ENCODE measurements at regions of chr7 and their contacts with region 1.

Region 1: DNA sequence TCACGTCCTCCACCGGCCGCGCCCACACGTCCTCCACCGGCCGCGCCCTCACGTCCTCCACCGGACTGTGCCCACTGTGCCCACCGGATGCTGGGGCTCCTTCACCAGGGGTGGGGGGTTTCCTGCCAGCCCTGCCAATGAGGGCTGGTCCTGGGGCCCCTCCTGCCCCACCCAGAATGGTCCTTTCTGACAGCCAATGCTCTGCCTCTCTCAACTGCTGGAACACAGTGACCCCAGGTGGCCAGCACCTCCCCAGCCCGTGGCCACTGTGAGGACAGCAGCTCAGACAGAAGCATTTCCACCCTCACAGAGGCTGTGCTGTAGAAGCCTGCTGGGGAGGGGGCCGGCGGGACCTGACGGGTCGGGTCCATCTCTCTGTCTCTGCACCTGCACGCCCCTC is 90.1 kb upstream of the DNAAF5 start:
- DNase-seq: no peak
- ATAC-seq: no peak

Region 2: DNA sequence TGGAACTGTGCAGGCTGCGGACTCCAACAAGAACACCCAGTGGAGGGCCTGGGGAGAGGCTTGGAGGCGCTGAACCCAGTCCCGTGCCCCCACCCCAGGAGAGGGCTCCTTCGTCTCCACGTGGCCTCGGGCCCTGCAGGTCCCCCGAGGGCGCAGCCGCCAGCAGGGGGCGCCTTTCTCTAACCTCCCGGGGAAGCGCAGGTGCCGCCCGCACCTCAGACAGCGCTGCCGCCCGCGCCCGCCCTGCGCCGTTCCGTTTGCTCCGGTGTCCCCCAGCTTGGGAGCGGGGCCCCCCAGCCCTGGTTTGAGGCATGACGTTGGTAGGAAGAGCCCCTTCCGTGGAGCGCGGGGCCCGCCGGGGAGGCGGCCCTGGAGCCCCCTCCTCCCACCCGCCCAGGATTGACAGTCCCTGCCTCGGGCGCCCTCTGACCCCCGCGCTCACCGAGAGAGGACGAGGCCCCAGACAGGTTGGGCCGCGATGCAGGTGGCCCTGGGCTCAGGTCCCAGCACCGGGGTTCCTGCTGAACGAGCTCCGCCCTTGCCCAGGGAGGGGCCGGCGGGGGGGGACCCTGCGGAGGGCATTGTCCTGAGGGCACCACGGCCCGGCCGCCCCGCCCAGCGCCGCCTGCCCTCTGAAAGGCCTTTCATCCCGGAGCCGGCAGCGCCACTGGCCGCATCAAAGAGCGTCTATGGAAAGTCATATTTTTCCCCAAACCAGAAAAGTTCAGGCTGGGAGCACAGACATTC is 303.6 kb before region 1 on chr7:
- intact Hi-C with region 1: loop called (anchors 5 kb)
- DNase-seq: peak; percentile 90
- ATAC-seq: peak; percentile 92

Region 3: DNA sequence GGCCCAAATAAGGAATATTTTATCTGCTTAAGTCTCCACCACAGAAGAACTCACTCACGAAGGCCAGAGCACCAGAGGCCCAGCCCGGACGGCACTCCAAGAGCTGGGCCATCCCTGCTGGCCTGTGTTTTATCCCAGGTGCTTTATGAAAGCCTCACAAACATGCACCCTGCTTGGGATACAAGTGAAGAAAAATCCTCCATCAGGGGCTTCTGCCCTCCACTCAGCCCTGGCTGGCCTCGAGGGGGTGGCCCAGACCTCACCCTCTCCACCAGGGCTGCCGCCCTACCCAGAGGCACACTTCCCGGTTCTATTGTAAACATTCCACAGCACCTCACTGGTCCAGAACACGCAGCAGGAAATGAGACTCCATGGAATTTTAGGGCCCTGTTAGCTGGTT is 70.3 kb after region 1 on chr7:
- intact Hi-C with region 1: no loop called
- DNase-seq: no peak
- ATAC-seq: no peak

Region 4: DNA sequence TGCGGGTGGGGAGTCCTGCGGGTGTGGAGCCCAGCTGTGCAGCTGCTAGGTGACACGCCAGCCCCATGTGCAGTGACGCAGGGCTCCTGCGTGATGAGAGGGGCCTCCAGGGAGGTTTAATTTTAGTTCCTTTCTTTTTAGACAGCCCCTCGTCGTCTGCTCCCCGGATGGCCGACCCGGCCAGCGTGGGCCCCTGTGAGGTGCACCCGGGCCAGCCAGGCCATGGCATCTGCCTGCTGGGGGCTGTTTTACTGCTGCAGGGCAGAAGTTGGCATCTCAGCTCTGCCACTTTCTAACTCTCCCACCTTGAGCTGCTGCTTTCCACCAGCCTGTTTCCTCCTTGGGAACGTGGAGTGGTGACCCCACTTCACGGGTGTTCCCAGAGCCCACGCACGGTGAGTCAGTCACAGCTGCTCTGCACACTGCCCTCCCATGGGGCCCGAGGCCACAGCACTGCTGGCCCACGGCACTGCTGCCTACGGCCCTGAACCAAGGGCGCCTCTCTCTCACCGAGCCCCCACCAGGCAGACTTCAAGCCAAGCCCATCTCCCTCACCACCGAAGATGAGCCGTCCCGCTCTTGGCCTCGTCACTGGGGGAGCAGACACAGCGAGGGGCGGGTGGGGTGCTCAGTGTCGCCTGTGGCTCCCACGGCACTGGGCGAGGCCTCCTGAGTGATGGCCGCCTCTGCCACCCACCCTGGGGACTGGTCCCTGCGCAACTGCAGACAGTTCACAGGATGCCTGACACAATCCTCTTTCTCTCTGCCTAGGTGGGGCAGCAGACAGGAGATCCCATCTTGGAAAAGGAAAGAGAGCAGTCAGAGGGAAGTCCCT is 367.8 kb after region 1 on chr7:
- intact Hi-C with region 1: no loop called
- DNase-seq: no peak
- ATAC-seq: no peak

Measured in Right ventricle myocardium inferior (tissue), 1 donor.